ENCODE measurements at regions of chr1 and their contacts with region 1.

Region 1: GRCh38 chr1:203625628-203626019 is 1.0 kb upstream of the ATP2B4 start:
- DNase-seq: peak in 1 of 2 experiments; percentile 58
- ATAC-seq: peak; percentile 11 to 30; a peak in 4 of 6 replicates
- H3K4me3 ChIP-seq: no peak overlapping the region
- H3K27ac ChIP-seq: peak overlapping the region; percentile 79 to 92
- H3K4me1 ChIP-seq: peaks cover 28% of the 10 kb centered on the region
- CTCF ChIP-seq: peak; percentile 42
- EP300 ChIP-seq: no peak
- POLR2A ChIP-seq: no peak
- RAD21 ChIP-seq: peak; percentile 64 to 71

Region 2: GRCh38 chr1:203612932-203613682 is 12.5 kb before region 1 on chr1:
- CTCF ChIA-PET with region 1: interaction called, 16 read pairs
- POLR2A ChIA-PET with region 1: interaction called, 3 read pairs
- DNase-seq: no peak
- ATAC-seq: no peak
- H3K4me3 ChIP-seq: no peak overlapping the region
- H3K27ac ChIP-seq: no peak overlapping the region
- H3K4me1 ChIP-seq: no peaks in the 10 kb centered on the region
- CTCF ChIP-seq: no peak
- EP300 ChIP-seq: no peak
- POLR2A ChIP-seq: no peak
- RAD21 ChIP-seq: no peak

Measured in A549 (cell line).